ENCODE measurements at regions of chr2 and their contacts with region 1.

Region 1: GRCh38 chr2:19863303-19864041 is 38.3 kb downstream of the TTC32 start:
- ATAC-seq: peak; percentile 89 to 96 (median 94)
- H3K4me3 ChIP-seq: no peak overlapping the region
- H3K27ac ChIP-seq: no peak overlapping the region
- H3K4me1 ChIP-seq: peaks cover under 1 to 1% of the 10 kb centered on the region in 2 donors

Region 2: DNA sequence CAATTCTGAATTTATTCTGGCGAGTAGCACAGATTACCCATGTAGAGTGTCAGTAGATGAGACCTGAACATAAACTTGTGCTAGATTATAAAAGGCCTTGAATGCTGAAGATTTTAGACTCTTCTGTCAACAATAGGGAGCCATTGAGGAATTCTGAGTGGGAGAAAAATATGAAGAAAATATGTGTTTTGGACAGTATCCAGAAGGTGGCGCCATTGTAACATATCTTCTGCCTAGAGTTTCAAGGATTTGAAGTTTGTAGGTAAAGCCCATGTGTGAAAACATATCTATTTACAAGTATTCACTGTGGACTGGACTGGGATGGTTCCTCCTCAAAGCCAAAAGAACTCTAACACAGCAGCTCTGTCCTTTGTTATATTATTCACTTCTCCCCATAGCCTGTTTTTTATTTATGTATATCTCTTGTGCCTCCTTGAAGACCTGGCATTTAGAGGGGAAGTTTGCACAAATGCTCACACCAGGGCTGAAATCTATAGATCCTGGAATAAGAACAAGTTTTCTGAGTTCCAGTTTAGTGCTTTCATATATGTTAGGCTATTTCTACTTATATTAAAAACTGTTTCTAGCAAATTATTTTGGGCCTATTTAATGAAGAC is 1427.9 kb before region 1 on chr2:
- in situ Hi-C with region 1: loop called in 2 of 9 experiments (anchors 25 kb)
- ATAC-seq: peak in 3 of 8 experiments; percentile 44 to 63 (median 49)
- H3K4me3 ChIP-seq: no peak overlapping the region
- H3K27ac ChIP-seq: no peak overlapping the region
- H3K4me1 ChIP-seq: peaks cover 8 to 10% of the 10 kb centered on the region in 2 donors

Region 3: GRCh38 chr2:18749912-18750526 is 1113.5 kb before region 1 on chr2:
- in situ Hi-C with region 1: loop called in 2 of 9 experiments (anchors 25 kb)
- ATAC-seq: peak in 3 of 8 experiments; percentile 26 to 54 (median 49)
- H3K4me3 ChIP-seq: no peak overlapping the region
- H3K27ac ChIP-seq: no peak overlapping the region
- H3K4me1 ChIP-seq: no peaks in the 10 kb centered on the region

Region 4: GRCh38 chr2:19377717-19378116 is 485.8 kb before region 1 on chr2:
- in situ Hi-C with region 1: loop called in 4 of 9 experiments (anchors 10 to 25 kb)
- ATAC-seq: no peak
- H3K4me3 ChIP-seq: no peak overlapping the region
- H3K27ac ChIP-seq: no peak overlapping the region
- H3K4me1 ChIP-seq: no peaks in the 10 kb centered on the region

Measured in motor neuron (in vitro differentiated cells).